ENCODE measurements at regions of chr9 and their contacts with region 1.

Region 1: DNA sequence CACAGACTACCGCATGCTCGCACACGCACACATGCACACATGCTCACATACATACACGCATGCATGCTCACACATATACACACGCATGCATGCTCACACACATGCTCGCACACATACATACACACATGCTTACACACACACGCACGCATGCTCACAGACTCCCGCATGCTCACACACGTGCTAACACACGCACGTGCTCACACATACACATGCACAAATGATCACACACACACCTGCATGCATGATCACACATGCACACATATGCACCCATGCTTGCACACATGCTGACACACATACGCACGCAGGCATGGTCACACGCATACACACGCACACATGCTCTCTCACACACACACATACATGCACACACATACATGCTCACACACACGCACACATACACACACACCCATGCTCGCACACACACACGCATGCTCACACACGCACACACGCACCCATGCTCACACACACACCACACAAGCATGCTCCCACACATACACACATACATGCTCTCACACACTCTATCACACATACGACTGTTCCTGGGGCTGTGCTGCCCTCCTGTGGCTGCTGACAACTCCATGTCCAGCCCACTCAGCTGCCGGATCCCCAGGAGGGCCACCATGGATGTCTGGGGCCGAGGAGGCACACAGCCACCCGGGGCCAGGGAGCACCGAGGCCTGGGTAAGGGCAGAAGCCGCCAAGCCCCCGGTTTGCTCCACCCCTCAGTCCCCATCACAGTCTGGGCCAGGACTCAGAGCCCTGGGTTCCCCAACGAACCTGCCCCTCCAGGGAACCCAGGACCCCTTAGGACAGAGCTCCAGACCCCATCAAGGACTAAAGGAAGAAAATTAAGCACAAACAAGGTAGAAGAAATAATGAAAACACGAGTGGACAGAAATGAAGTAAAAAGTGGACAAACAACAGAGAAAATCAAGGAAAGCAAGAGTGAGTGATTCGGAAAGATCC is 31.4 kb upstream of the EGFL7 start:
- DNase-seq: peak; percentile 91
- ATAC-seq: peak; percentile 88

Region 2: DNA sequence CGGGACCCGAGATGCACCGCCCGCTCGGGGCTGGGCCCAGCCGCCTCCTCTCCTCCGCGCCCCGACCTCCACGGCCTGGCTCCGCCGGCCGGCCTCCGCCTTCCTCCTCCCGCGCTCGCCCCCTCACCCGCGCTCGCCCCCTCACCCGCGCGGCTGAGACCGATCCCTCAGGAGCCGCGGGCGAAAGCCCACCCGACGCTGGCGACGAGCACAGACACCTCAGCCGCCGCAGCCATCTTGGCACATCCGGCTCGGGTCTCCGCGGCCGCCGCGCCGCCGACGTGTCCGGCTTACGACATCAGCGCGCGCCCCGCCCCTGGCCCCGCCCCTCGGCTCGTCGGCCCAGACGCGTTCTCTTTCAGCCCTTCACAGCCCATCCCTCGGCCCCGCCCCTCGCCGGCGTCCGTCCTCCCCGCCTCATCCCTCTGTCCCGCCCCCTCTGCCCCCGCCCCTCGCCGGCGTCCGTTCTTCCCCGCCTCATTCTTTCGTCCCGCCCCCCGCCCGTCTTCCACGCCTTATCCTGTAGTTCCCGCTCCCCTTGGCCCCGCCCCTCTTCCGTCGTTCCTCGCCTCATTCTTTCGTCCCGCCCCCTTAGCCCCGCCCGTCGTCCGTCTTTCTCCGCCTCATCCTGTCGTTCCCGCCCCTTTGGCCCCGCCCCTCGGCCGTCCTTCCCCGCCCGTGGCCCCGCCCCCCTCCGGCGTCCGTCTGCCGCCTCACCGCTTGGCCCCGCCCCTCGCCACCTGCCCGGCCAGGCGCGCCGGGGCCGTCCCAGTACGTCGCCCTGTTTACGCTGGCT is 148.3 kb before region 1 on chr9 and contains the start of gene SEC16A:
- intact Hi-C with region 1: loop called (anchors 1 kb)
- DNase-seq: peak; percentile 100
- ATAC-seq: peak; percentile 89
- total RNA-seq, gene SEC16A: 22.3 TPM

Region 3: GRCh38 chr9:136488247-136489214 is 142.8 kb before region 1 on chr9:
- intact Hi-C with region 1: loop called (anchors 1 kb)
- DNase-seq: peak; percentile 90
- ATAC-seq: peak; percentile 26

Region 4: GRCh38 chr9:136539427-136540421 is 91.6 kb before region 1 on chr9:
- intact Hi-C with region 1: loop called (anchors 5 kb)
- DNase-seq: peak; percentile 97
- ATAC-seq: peak; percentile 66

Region 5: DNA sequence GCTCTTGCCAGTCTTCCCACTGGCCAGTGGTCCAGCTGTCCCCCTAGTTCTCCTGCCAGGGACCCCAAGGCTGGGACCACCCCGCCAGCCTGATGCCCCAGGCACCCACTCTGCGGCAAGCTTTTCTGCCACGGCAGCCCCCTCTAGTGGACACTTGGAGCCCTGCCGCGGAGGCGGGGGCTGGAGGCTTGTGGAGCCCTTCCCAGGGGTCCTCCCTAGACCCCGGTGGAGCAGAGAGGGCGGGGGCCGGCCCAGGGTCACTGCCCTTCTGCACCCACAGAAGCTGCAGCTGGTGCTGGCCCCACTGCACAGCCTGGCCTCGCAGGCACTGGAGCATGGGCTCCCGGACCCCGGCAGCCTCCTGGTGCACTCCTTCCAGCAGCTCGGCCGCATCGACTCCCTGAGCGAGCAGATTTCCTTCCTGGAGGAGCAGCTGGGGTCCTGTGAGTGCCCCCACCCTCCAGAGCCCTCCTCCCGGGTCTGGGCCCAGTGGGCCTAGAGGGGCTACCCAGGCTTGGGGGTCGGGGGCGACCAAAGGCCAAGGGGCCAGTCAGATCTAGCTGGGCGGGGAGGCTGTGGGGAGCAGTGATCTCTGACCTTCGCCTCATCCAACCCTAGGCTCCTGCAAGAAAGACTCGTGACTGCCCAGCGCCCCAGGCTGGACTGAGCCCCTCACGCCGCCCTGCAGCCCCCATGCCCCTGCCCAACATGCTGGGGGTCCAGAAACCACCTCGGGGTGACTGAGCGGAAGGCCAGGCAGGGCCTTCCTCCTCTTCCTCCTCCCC is 40.5 kb after region 1 on chr9:
- intact Hi-C with region 1: no loop called
- DNase-seq: no peak
- ATAC-seq: no peak

Region 6: DNA sequence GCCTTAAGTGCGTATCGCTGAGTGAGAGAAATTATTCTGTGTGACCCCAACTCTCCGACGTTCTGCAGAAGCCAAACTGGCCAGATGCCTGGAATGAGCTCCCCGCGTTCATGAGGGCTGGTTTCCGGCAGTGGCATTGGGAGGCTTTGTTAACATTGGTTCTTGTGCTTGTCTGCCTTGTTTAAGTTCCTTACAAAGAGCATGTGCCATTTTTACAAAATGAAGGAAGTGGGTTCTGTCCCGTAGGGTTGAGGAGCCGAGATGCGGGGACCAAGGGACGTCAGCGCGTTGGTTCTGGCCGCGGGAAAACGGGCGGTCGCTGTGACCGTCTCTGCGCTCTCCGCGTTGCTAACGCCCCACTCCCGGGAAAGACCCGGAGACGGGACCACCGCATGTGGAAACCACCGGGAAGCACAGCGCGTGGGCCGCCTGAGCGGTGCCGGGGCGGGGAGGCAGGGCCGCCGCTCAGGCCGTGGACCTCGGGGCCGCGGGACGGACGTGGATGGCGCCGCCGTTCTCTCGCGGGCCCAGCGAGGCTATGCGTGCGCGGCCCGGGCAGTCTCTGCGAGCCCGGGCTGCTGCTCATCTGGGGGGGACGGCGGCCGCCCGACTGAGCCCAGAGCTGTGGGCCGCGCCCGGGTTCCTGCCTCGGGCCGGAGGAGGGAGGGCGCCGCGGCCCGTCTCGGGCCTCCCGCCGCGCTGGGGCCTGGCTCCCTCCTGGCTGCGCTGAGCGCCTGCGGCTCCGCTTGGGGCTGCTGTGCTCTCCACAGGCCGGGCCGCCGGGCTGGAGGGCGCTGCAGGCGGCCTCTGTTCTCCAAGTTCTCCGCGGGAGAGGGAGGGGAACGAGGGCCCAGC is 189.9 kb after region 1 on chr9:
- intact Hi-C with region 1: no loop called
- DNase-seq: peak; percentile 68
- ATAC-seq: peak; percentile 72